B cell (primary cell): ENCODE measurements at regions of chr17 and their contacts with region 1.

Region 1: DNA sequence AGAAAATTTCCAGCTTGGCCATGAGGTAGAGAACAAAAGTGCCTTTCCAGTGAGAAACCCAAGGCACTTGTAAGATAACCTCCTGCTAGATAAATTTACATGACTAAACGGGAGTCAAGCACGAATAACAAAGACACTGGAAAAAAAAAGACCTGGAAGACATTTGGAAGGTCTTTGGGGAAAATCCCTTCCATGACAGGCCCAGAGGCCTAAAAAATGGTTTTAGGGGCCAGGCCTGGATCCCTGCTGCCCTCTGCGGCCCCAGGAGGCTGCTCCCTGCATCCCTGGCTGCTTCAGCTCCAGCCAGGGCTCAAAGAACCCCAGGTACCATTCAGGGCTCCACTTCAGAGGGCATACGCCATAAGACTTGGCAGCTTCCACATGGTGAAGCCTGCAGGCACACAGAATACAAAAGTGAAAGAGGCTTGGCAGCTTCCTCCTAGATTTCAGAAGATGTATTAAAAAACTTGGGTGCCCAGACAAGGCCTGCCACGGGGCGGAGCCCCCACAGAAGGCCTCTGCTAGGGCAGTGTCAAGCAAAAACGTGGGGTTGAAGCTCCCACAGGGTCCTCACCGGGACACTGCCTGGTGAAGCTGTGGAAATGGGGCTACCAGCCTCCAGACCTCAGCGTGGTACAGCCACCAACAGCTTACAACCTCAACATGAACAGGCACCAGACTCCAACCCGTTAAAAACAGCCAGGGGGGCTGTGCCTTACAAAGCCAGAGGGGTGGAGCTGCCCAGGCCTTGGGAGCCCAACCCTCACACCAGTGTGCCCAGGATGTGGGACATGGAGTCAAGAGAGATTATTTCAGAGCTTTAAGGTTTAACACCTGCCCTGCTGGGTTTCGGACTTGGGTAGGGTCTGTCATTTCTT is 77.1 kb downstream of the SDK2 start:
- DNase-seq: peak; percentile 77
- ATAC-seq: peak; percentile 89
- H3K4me3 ChIP-seq: no peak overlapping the region
- H3K4me3 Mint-ChIP-seq: peak overlapping the region; percentile 52
- H3K27ac ChIP-seq: peak overlapping the region; percentile 74 to 93
- H3K27ac Mint-ChIP-seq: peak overlapping the region; percentile 95
- H3K4me1 ChIP-seq: peaks cover 28 to 31% of the 10 kb centered on the region in 2 donors
- H3K4me1 Mint-ChIP-seq: peaks cover 34% of the 10 kb centered on the region
- H3K27me3 ChIP-seq: no peaks in the 10 kb centered on the region
- H3K27me3 Mint-ChIP-seq: no peaks in the 10 kb centered on the region
- CTCF ChIP-seq: peak; percentile 5

Region 2: DNA sequence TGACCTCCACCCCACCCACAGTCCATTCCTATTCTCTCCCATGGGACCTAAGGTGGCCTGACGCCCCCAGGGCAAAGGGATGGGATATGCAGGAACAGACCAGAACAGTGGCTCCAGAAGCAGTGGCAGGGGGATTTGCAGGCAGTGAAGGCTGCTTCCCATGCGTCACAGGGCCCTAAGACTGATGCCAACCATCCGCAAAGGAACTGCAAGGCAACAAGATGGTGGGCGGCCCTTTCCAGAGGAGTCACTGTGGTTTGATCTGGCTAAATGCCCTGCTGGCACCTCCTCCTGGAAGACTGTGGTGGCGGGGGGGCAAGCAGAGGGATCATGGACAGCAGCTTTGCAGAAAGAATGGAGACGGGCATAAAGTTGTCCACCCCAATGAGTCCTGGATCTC is 470.3 kb before region 1 on chr17:
- CTCF ChIA-PET with region 1: no interaction called
- POLR2A ChIA-PET with region 1: no interaction called
- intact Hi-C with region 1: no loop called
- DNase-seq: no peak
- ATAC-seq: no peak
- H3K4me3 ChIP-seq: no peak overlapping the region
- H3K4me3 Mint-ChIP-seq: no peak overlapping the region
- H3K27ac ChIP-seq: no peak overlapping the region
- H3K27ac Mint-ChIP-seq: no peak overlapping the region
- H3K4me1 ChIP-seq: peaks cover 2 to 10% of the 10 kb centered on the region in 2 donors
- H3K4me1 Mint-ChIP-seq: peaks cover 19% of the 10 kb centered on the region
- H3K27me3 ChIP-seq: peaks cover 0 to 8% (median under 1%) of the 10 kb centered on the region in 4 experiments
- H3K27me3 Mint-ChIP-seq: peaks cover 16% of the 10 kb centered on the region
- CTCF ChIP-seq: no peak

Region 3: DNA sequence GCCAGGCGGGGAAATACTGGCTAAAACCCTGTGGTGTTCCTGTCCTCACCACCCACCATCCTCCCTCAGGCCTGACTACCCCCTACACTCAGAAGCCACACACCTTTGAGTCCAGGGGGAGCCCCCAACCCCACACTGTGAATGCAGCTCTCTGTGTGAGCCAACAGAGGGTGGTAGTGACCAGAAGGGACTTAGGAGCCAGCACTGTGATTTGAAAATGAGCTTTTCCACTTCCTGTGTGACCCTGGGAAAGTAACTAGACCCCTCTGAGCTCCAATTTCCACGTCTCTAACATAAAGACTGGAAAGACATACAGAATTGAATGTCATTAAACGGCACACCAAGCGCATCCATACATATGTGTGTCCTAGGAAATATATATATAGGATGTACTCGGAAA is 18.4 kb after region 1 on chr17:
- CTCF ChIA-PET with region 1: interaction called, 28 read pairs
- POLR2A ChIA-PET with region 1: interaction called, 16 read pairs
- intact Hi-C with region 1: no loop called
- DNase-seq: no peak
- ATAC-seq: peak; percentile 52
- H3K4me3 ChIP-seq: no peak overlapping the region
- H3K4me3 Mint-ChIP-seq: no peak overlapping the region
- H3K27ac ChIP-seq: no peak overlapping the region
- H3K27ac Mint-ChIP-seq: peak overlapping the region; percentile 41
- H3K4me1 ChIP-seq: peaks cover 55 to 60% of the 10 kb centered on the region in 2 donors
- H3K4me1 Mint-ChIP-seq: peaks cover 70% of the 10 kb centered on the region
- H3K27me3 ChIP-seq: no peaks in the 10 kb centered on the region
- H3K27me3 Mint-ChIP-seq: no peaks in the 10 kb centered on the region
- CTCF ChIP-seq: peak; percentile 20

Region 4: DNA sequence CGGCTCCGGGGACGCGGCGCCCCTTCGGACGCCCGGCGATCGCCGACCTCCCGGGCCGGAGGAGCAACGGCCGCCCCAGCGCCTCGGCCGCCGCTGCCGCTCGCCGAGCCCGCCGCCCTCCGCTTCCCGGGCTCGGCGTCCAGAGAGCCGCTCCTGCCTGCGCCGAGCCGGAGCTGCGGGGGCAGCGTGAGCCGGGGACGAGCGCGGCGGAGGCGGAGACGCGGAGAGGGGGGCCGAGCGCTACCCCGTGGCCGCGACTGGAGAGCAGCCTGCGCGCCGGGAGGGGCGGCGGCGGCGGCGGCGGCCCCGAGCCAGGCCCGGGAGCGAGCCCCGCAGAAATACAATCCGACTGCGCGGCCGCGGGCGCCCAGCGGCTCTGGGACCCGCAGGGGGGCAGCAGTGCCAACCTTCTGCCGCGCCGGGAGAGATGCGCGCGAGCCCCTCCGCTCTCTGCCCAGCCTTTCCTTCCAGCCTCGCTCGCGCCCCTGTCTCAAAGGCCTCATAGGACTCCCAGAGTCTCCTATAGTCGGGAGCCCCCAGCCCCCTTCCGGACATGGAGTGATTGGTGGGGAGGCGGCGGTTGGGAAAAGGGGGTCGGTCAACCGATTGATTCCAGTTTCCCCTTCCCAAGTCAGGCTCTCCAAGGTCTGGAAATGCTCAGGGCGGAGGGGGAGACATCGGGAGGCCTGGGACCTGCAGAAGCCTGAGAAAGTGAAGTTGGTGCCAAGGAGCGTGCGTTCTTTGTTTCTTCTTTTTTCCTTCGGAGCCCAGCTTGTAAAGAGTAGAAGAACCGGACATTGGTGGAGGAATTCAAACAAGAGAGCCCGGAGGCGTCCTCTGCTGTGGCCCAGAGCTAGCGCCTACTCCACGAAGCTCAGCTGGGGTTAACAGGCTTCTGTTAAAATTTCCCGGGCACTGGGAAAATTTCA is 78.2 kb after region 1 on chr17:
- CTCF ChIA-PET with region 1: interaction called, 38 read pairs
- POLR2A ChIA-PET with region 1: interaction called, 3 read pairs
- intact Hi-C with region 1: loop called (anchors 2 kb)
- DNase-seq: peak; percentile 82
- ATAC-seq: peak; percentile 70
- H3K4me3 ChIP-seq: peak overlapping the region in 3 of 5 experiments; percentile 41 to 72 (median 63)
- H3K4me3 Mint-ChIP-seq: peak overlapping the region; percentile 73
- H3K27ac ChIP-seq: no peak overlapping the region
- H3K27ac Mint-ChIP-seq: peak overlapping the region; percentile 50
- H3K4me1 ChIP-seq: peaks cover 20 to 38% of the 10 kb centered on the region in 2 donors
- H3K4me1 Mint-ChIP-seq: peaks cover 26% of the 10 kb centered on the region
- H3K27me3 ChIP-seq: peaks cover 0 to 23% (median 0%) of the 10 kb centered on the region in 4 experiments
- H3K27me3 Mint-ChIP-seq: peaks cover 4% of the 10 kb centered on the region
- CTCF ChIP-seq: no peak

Region 5: GRCh38 chr17:73710095-73710592 is 143.0 kb after region 1 on chr17:
- CTCF ChIA-PET with region 1: interaction called, 5 read pairs
- POLR2A ChIA-PET with region 1: no interaction called
- intact Hi-C with region 1: loop called (anchors 2 kb)
- DNase-seq: peak; percentile 77
- ATAC-seq: peak; percentile 61
- H3K4me3 ChIP-seq: no peak overlapping the region
- H3K4me3 Mint-ChIP-seq: no peak overlapping the region
- H3K27ac ChIP-seq: no peak overlapping the region
- H3K27ac Mint-ChIP-seq: no peak overlapping the region
- H3K4me1 ChIP-seq: peaks cover 19 to 28% of the 10 kb centered on the region in 2 donors
- H3K4me1 Mint-ChIP-seq: peaks cover 22% of the 10 kb centered on the region
- H3K27me3 ChIP-seq: peaks cover 0 to 11% (median 3%) of the 10 kb centered on the region in 4 experiments
- H3K27me3 Mint-ChIP-seq: peaks cover 17% of the 10 kb centered on the region
- CTCF ChIP-seq: peak; percentile 81